ENCODE measurements at regions of chr5 and their contacts with region 1.

Region 1: GRCh38 chr5:150161242-150162141 is 5.1 kb upstream of the CDX1 start:
- DNase-seq: no peak
- H3K4me3 ChIP-seq: no peak overlapping the region
- H3K27ac ChIP-seq: peak overlapping the region in 2 of 4 donors; percentile 87 to 91
- H3K4me1 ChIP-seq: peaks cover 8 to 70% (median 9%) of the 10 kb centered on the region in 3 donors
- H3K27me3 ChIP-seq: peaks cover 0 to 34% (median 0%) of the 10 kb centered on the region in 4 donors
- CTCF ChIP-seq: peak; percentile 64 to 97 (median 96)
- POLR2A ChIP-seq: no peak

Region 2: DNA sequence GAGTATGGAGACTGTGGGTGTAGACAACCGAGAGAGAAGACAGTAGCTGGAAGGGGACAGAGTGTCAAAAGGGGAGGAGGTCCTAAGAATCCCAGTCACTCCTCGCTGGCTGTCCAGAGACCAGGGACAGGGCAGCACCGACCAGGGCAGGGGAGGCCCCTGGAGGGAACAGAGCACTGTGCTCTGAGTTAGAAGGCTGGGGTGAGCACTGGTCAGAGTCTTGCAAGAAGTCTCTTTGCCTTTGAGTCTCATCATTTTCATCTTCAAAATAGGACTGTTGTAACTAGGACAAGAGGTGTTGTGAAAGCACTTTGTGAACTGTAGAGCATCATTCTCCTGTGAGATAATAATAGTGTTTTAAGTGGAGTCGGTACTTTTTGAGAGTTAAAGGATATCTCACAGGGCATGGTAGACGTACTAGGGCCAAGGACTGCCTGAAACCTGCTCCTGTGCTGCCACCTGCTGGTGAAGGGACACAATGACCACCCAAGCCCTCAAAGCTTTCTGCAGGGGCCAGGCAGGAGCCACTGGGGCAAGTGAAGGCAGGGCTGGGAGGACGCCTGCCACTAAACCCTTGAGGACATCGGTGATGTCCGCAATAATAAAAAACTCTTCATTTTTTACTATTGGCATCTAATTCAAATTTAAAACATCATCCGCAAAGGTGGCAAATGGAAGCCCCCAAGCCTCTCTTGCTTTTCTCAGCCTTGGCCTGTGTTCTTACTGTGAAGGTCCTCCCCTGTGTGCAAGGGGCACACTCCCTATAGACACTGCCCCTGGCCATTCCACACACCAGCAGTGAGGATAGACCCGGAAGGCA is 56.6 kb after region 1 on chr5:
- intact Hi-C with region 1: loop called (anchors 5 kb)
- DNase-seq: peak; percentile 17
- H3K4me3 ChIP-seq: no peak overlapping the region
- H3K27ac ChIP-seq: no peak overlapping the region
- H3K4me1 ChIP-seq: peaks cover 0 to 10% (median 3%) of the 10 kb centered on the region in 3 donors
- H3K27me3 ChIP-seq: peaks cover 0 to 43% (median 0%) of the 10 kb centered on the region in 4 donors
- CTCF ChIP-seq: peak; percentile 72 to 95 (median 90)
- POLR2A ChIP-seq: no peak

Region 3: GRCh38 chr5:150409638-150410523 is 248.4 kb after region 1 on chr5:
- intact Hi-C with region 1: no loop called
- DNase-seq: no peak
- H3K4me3 ChIP-seq: peak overlapping the region; percentile 5 to 64 (median 50)
- H3K27ac ChIP-seq: peak overlapping the region; percentile 81 to 95 (median 84)
- H3K4me1 ChIP-seq: peaks cover 16 to 71% (median 38%) of the 10 kb centered on the region in 3 donors
- H3K27me3 ChIP-seq: no peaks in the 10 kb centered on the region
- CTCF ChIP-seq: no peak
- POLR2A ChIP-seq: peak in 2 of 4 donors; percentile 6 to 59

Region 4: GRCh38 chr5:150517272-150518152 is 356.0 kb after region 1 on chr5:
- intact Hi-C with region 1: no loop called
- DNase-seq: no peak
- H3K4me3 ChIP-seq: no peak overlapping the region
- H3K27ac ChIP-seq: peak overlapping the region; percentile 60 to 98 (median 86)
- H3K4me1 ChIP-seq: peaks cover 21 to 99% (median 82%) of the 10 kb centered on the region in 3 donors
- H3K27me3 ChIP-seq: no peaks in the 10 kb centered on the region
- CTCF ChIP-seq: no peak
- POLR2A ChIP-seq: no peak

Measured in esophagus squamous epithelium (tissue), 5 donors.